ENCODE measurements at regions of chr5 and their contacts with region 1.

Region 1: GRCh38 chr5:168583742-168584482 is 4.7 kb upstream of the PANK3 start:
- H3K4me3 ChIP-seq: no peak overlapping the region
- H3K27ac ChIP-seq: no peak overlapping the region
- H3K4me1 ChIP-seq: no peaks in the 10 kb centered on the region
- CTCF ChIP-seq: no peak

Region 2: GRCh38 chr5:167969998-167970397 is 613.9 kb before region 1 on chr5:
- CTCF ChIA-PET with region 1: no interaction called
- POLR2A ChIA-PET with region 1: no interaction called
- H3K4me3 ChIP-seq: no peak overlapping the region
- H3K27ac ChIP-seq: no peak overlapping the region
- H3K4me1 ChIP-seq: no peaks in the 10 kb centered on the region
- CTCF ChIP-seq: no peak

Region 3: GRCh38 chr5:168531987-168532864 is 51.7 kb before region 1 on chr5:
- CTCF ChIA-PET with region 1: no interaction called
- POLR2A ChIA-PET with region 1: interaction called, 11 read pairs
- H3K4me3 ChIP-seq: no peak overlapping the region
- H3K27ac ChIP-seq: no peak overlapping the region
- H3K4me1 ChIP-seq: no peaks in the 10 kb centered on the region
- CTCF ChIP-seq: no peak